Activated CD4-positive, alpha-beta T cell treated with anti-CD3 and anti-CD28 coated beads for 36 hours (primary cell): ENCODE measurements at regions of chr10 and their contacts with region 1.

Region 1: DNA sequence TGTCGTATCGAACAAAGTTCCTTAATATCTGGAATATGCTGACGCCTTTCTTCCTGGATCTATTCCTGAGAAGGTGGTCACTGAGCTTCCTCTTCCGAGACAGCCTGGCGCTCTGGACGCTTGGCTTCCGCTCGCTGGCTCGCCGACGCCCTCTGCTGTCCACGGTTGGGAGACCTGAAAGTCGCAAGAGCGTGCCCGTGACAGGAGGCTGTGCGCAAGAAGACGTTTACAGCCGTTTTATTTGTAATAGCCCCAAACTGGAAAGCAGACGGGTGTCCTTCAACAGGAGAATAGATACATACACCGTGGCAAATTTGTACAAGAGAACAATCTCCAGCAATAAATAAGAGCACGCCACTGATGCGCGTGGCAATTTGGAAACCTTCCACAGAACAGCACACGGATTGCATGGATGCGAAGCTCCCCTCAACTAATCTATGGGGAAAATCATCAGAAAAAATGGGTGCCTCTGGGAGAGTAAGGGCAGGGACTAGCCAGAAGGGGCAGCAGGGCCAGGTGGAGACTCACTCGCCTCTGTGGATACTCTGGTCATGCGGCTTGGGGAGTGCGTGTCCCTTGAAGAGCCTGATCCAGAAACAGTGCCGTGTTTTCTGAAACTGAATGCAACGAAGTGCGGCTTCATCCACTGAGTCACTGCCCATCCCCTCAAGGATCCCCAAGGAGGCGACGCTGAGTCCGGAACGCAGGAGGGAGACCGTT is 41.5 kb upstream of the BNIP3 start:
- DNase-seq: peak; percentile 90
- ATAC-seq: peak; percentile 94
- H3K4me3 Mint-ChIP-seq: no peak overlapping the region
- H3K27ac Mint-ChIP-seq: no peak overlapping the region
- H3K4me1 Mint-ChIP-seq: peaks cover 5% of the 10 kb centered on the region
- H3K27me3 Mint-ChIP-seq: peaks cover 22% of the 10 kb centered on the region

Region 2: GRCh38 chr10:131609176-131609575 is 414.1 kb before region 1 on chr10:
- CTCF ChIA-PET with region 1: no interaction called
- POLR2A ChIA-PET with region 1: no interaction called
- intact Hi-C with region 1: no loop called
- DNase-seq: no peak
- ATAC-seq: no peak
- H3K4me3 Mint-ChIP-seq: no peak overlapping the region
- H3K27ac Mint-ChIP-seq: no peak overlapping the region
- H3K4me1 Mint-ChIP-seq: no peaks in the 10 kb centered on the region
- H3K27me3 Mint-ChIP-seq: peaks cover 5% of the 10 kb centered on the region

Region 3: DNA sequence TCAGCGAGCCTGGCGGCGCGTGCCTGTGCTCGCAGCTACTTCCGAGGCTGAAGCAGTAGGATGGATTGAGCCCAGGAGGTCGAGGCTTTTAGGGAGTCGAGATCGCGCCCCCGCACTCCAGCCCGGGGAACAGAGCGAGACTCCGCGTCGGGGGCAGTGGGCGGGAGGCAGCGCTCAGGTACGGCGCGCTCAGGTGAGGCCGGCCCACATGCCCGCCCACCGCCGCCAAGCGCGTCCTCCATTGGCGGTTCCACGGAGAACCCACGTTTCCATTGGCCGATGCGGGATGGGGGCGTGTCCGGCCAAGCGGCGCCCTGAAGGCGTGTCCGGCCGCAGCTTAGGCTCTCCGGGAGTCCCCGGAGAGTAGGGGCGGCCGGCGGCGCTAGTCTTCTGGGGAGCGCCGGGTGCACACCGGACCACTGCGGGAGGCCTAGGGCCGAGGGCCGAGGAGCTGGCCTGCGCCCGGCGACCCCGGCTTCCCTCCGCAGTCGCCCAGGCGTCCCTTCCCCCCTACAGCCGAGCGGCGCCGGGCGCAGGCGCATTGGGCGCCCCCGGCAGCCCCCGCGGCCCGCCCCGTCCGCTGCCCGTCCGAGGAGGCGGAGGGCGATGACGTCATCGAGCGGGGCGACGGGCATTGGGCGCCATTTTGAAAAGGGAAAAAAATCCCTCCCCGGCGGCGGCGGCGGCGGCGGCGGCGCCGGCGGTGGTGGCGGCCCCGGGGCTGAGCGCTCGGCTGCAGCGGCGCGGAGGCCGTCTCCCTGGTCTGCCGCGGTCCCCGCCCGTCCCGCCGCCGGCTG is 122.7 kb before region 1 on chr10 and contains the start of gene PPP2R2D:
- CTCF ChIA-PET with region 1: interaction called, 7 read pairs
- POLR2A ChIA-PET with region 1: no interaction called
- intact Hi-C with region 1: loop called in 1 of 2 experiments (anchors 5 kb)
- DNase-seq: peak; percentile 97
- ATAC-seq: peak; percentile 83
- H3K4me3 Mint-ChIP-seq: peak within 1 kb of the TSS; percentile 93
- H3K27ac Mint-ChIP-seq: peak within 1 kb of the TSS; percentile 92
- H3K4me1 Mint-ChIP-seq: peaks cover 53% of the 10 kb centered on the region
- H3K27me3 Mint-ChIP-seq: peaks cover 7% of the 10 kb centered on the region
- total RNA-seq, gene PPP2R2D: 30.0 to 39.3 TPM

Region 4: GRCh38 chr10:131981429-131982184 is 41.6 kb before region 1 on chr10 and contains the start of gene BNIP3:
- CTCF ChIA-PET with region 1: interaction called, 7 read pairs
- POLR2A ChIA-PET with region 1: no interaction called
- intact Hi-C with region 1: loop called in 1 of 2 experiments (anchors 2 kb)
- DNase-seq: peak; percentile 97
- ATAC-seq: peak; percentile 90
- H3K4me3 Mint-ChIP-seq: peak within 1 kb of the TSS; percentile 90
- H3K27ac Mint-ChIP-seq: peak within 1 kb of the TSS; percentile 79
- H3K4me1 Mint-ChIP-seq: peaks cover 36% of the 10 kb centered on the region
- H3K27me3 Mint-ChIP-seq: no peaks in the 10 kb centered on the region
- total RNA-seq, gene BNIP3: 200 to 256 TPM

Region 5: GRCh38 chr10:132001238-132001972 is 21.8 kb before region 1 on chr10:
- CTCF ChIA-PET with region 1: interaction called, 10 read pairs
- POLR2A ChIA-PET with region 1: interaction called, 4 read pairs
- intact Hi-C with region 1: no loop called
- DNase-seq: no peak
- ATAC-seq: peak; percentile 79
- H3K4me3 Mint-ChIP-seq: peak overlapping the region; percentile 6
- H3K27ac Mint-ChIP-seq: no peak overlapping the region
- H3K4me1 Mint-ChIP-seq: peaks cover 8% of the 10 kb centered on the region
- H3K27me3 Mint-ChIP-seq: no peaks in the 10 kb centered on the region

Region 6: GRCh38 chr10:132011024-132011423 is 12.2 kb before region 1 on chr10:
- CTCF ChIA-PET with region 1: interaction called, 14 read pairs
- POLR2A ChIA-PET with region 1: no interaction called
- intact Hi-C with region 1: no loop called
- DNase-seq: no peak
- ATAC-seq: no peak
- H3K4me3 Mint-ChIP-seq: no peak overlapping the region
- H3K27ac Mint-ChIP-seq: no peak overlapping the region
- H3K4me1 Mint-ChIP-seq: no peaks in the 10 kb centered on the region
- H3K27me3 Mint-ChIP-seq: peaks cover 8% of the 10 kb centered on the region